SK-N-SH (cell line): ENCODE measurements at regions of chr1 and their contacts with region 1.

Region 1: DNA sequence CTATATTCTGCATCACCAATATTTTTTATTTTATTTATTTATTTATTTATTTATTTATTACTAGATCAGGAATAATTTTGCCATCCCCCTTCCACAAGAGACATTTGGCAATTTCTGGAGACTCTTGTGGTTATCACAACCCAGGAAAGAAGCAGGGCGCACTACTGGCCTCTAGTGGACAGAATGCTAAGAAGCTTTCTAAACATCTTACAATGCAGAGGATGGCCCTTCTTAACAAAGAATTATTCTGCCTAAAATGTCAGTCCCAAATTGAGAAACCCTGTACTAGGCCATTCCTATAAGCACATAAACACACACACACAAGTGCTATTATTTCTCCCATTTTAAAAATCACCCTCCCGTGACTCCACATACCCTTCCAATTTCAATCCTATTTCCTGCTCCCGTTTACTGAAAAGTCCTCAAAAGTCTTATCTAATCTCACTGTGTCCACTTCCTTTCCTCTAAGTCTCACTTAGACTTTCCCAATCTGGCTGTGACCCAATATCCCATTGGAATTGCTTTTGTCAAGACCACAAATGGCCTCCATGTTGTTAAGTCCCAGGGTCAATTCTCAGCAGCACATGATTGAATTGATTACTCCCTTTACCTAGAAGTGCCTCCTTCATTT is 43.7 kb upstream of the RNF11 start:
- DNase-seq: peak; percentile 41
- H3K4me3 ChIP-seq: no peak overlapping the region; a peak in 1 of 4 replicates
- H3K27ac ChIP-seq: no peak overlapping the region
- H3K4me1 ChIP-seq: no peaks in the 10 kb centered on the region
- H3K27me3 ChIP-seq: no peaks in the 10 kb centered on the region
- CTCF ChIP-seq: peak; percentile 82
- EP300 ChIP-seq: no peak
- RAD21 ChIP-seq: peak; percentile 65

Region 2: DNA sequence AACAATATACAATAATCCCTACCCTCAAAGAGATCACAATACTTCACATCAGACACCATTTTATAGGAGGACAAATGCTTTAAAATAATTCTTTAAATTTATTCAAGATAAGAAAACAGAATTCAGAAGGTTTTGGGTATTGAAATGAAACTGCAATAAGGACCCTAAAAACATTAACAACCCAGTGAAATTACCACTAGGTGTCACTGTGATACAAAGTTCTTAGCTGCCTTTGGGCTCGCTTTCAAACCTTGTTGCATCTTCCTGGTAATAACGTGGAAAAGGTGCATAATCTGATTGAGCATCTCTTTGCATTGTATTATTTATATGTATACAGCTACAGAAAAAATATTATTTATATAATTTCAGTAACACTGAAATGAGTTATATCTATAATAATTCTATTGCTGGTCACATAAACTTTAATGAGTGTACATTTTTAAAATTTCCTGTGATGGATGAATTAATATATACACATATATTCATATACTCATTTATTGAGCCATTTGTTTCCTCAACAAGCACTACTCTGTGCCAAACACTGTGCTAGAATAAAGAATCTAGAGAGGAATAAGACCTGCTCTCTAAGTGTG is 417.5 kb before region 1 on chr1:
- CTCF ChIA-PET with region 1: interaction called, 73 read pairs
- POLR2A ChIA-PET with region 1: no interaction called
- DNase-seq: peak; percentile 55
- H3K4me3 ChIP-seq: no peak overlapping the region
- H3K27ac ChIP-seq: no peak overlapping the region
- H3K4me1 ChIP-seq: no peaks in the 10 kb centered on the region
- H3K27me3 ChIP-seq: no peaks in the 10 kb centered on the region
- CTCF ChIP-seq: peak; percentile 82
- EP300 ChIP-seq: no peak
- RAD21 ChIP-seq: peak; percentile 84

Region 3: GRCh38 chr1:51088488-51088887 is 103.8 kb before region 1 on chr1:
- CTCF ChIA-PET with region 1: interaction called, 13 read pairs
- POLR2A ChIA-PET with region 1: no interaction called
- DNase-seq: no peak
- H3K4me3 ChIP-seq: no peak overlapping the region
- H3K27ac ChIP-seq: no peak overlapping the region
- H3K4me1 ChIP-seq: no peaks in the 10 kb centered on the region
- H3K27me3 ChIP-seq: no peaks in the 10 kb centered on the region
- CTCF ChIP-seq: peak; percentile 37
- EP300 ChIP-seq: no peak
- RAD21 ChIP-seq: peak; percentile 57

Region 4: GRCh38 chr1:51154776-51155175 is 37.6 kb before region 1 on chr1:
- CTCF ChIA-PET with region 1: interaction called, 10 read pairs
- POLR2A ChIA-PET with region 1: no interaction called
- DNase-seq: no peak
- H3K4me3 ChIP-seq: no peak overlapping the region
- H3K27ac ChIP-seq: no peak overlapping the region
- H3K4me1 ChIP-seq: no peaks in the 10 kb centered on the region
- H3K27me3 ChIP-seq: no peaks in the 10 kb centered on the region
- CTCF ChIP-seq: no peak
- EP300 ChIP-seq: no peak
- RAD21 ChIP-seq: no peak

Region 5: GRCh38 chr1:51170342-51170741 is 22.0 kb before region 1 on chr1:
- CTCF ChIA-PET with region 1: interaction called, 109 read pairs
- POLR2A ChIA-PET with region 1: no interaction called
- DNase-seq: no peak
- H3K4me3 ChIP-seq: no peak overlapping the region
- H3K27ac ChIP-seq: no peak overlapping the region
- H3K4me1 ChIP-seq: no peaks in the 10 kb centered on the region
- H3K27me3 ChIP-seq: no peaks in the 10 kb centered on the region
- CTCF ChIP-seq: no peak
- EP300 ChIP-seq: no peak
- RAD21 ChIP-seq: no peak

Region 6: DNA sequence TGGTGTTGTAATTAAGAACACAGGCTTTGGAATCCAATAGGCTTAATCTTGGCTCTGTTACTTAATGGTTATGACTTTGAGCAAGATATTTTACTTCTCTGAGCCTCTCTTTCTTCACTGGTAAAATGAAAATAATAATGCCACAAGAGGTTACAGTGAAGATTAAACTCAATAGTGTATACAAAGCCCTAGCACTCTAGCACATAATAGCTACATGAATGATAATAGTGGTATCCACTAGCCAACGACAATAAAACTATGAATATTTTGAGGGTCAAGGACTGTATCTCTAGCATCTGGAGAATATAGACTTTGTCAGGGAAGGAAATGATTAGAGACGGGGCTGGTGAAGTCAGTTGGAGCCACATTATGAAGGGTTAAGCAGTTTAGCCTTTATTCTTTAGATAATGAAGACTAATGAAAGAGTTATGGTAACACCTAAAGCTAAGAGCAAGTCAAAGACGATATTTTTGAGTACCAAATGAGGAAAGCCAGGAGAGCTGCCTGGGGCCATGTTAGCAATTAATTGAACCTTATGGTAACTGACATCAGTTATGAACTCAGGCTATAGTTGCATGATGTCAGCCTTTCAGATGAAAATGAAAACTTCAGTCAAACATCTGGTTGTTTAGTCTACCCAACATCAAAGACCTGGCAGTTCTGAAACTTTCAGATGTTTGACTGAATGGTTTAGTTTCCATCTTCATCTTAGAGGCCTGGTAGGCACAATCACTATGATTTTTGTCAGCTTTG is 11.0 kb after region 1 on chr1:
- CTCF ChIA-PET with region 1: interaction called, 75 read pairs
- POLR2A ChIA-PET with region 1: no interaction called
- DNase-seq: peak; percentile 30
- H3K4me3 ChIP-seq: no peak overlapping the region
- H3K27ac ChIP-seq: no peak overlapping the region
- H3K4me1 ChIP-seq: no peaks in the 10 kb centered on the region
- H3K27me3 ChIP-seq: no peaks in the 10 kb centered on the region
- CTCF ChIP-seq: no peak
- EP300 ChIP-seq: peak in 1 of 2 experiments; percentile 33; a peak in 1 of 4 replicates
- RAD21 ChIP-seq: no peak

Region 7: GRCh38 chr1:51240084-51240483 is 47.8 kb after region 1 on chr1:
- CTCF ChIA-PET with region 1: no interaction called
- POLR2A ChIA-PET with region 1: no interaction called
- DNase-seq: no peak
- H3K4me3 ChIP-seq: no peak overlapping the region
- H3K27ac ChIP-seq: no peak overlapping the region
- H3K4me1 ChIP-seq: peaks cover 13% of the 10 kb centered on the region in 2 experiments; a peak in 3 of 4 replicates
- H3K27me3 ChIP-seq: no peaks in the 10 kb centered on the region
- CTCF ChIP-seq: no peak
- EP300 ChIP-seq: no peak
- RAD21 ChIP-seq: no peak

Region 8: GRCh38 chr1:51296383-51297357 is 104.3 kb after region 1 on chr1:
- CTCF ChIA-PET with region 1: interaction called, 39 read pairs
- POLR2A ChIA-PET with region 1: no interaction called
- DNase-seq: peak; percentile 91
- H3K4me3 ChIP-seq: peak overlapping the region in 1 of 2 experiments; percentile 17; a peak in 1 of 4 replicates
- H3K27ac ChIP-seq: no peak overlapping the region
- H3K4me1 ChIP-seq: peaks cover 0 to 3% of the 10 kb centered on the region in 2 experiments; a peak in 1 of 4 replicates
- H3K27me3 ChIP-seq: no peaks in the 10 kb centered on the region
- CTCF ChIP-seq: peak; percentile 94
- EP300 ChIP-seq: no peak
- RAD21 ChIP-seq: peak; percentile 86